Calu3 (cell line): ENCODE measurements at regions of chr20 and their contacts with region 1.

Region 1: DNA sequence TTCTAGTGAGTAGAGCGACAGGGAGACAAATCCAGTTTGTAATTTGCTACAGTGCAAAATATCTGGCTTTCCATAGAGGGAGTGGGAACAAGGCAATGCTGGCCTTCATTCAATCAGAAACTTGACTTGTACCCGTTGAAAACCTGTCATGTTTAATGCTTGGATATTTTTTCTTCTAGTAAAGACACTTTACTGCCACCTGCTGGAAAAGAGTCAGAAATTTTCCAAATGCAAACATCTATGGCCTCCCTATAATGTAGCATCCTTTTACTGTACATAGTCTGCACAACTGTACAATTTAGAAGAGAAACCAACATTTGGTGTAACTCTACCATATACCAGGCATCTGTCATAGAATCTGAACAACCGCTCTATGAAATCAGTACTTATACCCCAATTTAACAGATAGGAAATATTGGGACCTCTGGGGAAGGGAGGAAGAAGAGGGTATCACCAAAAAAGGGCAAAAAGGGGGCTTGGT is 16.7 kb upstream of the TBC1D20 start:
- DNase-seq: peak; percentile 23
- H3K4me3 Mint-ChIP-seq: no peak overlapping the region
- H3K27ac Mint-ChIP-seq: peak overlapping the region; percentile 35
- H3K4me1 Mint-ChIP-seq: peaks cover 8% of the 10 kb centered on the region
- H3K27me3 Mint-ChIP-seq: no peaks in the 10 kb centered on the region
- CTCF ChIP-seq: no peak

Region 2: DNA sequence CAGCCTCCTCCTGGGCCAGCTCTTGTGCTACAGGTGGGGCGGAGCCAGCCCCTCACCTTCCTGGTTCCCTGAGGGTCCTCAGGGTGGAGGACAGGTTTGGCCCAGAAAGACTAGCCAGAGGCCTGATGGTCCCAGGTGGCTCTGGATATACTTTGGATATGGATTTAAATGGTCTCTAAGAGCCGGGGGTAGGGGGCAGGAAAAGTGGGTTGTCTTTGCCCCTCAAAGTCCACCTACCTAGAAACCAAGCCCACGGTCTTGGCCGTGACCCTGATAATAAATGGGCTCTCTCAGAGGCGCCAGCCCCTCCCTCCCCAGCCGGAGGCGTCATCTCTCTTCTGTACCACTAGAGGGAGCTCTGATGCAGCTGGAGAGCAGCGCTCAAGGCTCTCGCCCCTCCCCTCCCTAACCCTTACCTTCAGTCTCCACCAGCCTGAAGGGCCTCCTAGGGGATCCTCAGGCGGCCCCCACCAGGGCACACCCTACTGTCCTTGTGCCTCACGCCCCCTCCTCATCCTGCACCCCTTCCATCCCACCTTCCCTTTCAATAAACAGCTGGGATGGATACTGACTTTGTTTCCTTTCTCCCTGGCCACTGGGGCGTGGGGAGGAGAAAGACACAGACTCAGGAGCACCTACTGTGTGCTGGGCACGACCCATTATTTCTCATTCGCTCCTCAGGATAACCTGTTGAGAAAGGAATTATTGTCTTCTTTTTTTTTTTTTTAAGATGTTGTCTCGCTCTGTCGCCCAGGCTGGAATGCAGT is 124.5 kb before region 1 on chr20:
- CTCF ChIA-PET with region 1: no interaction called
- intact Hi-C with region 1: loop called (anchors 1 kb)
- DNase-seq: peak; percentile 77
- H3K4me3 Mint-ChIP-seq: no peak overlapping the region
- H3K27ac Mint-ChIP-seq: no peak overlapping the region
- H3K4me1 Mint-ChIP-seq: peaks cover 10% of the 10 kb centered on the region
- H3K27me3 Mint-ChIP-seq: no peaks in the 10 kb centered on the region
- CTCF ChIP-seq: peak; percentile 81